Activated B cell treated with CpG ODN at 0.5 μM for 24 hours (primary cell): ENCODE measurements at regions of chr1 and their contacts with region 1.

Region 1: GRCh38 chr1:145978854-145979759 is 14.6 kb downstream of the POLR3GL start:
- DNase-seq: peak; percentile 55
- ATAC-seq: peak; percentile 81
- H3K4me3 Mint-ChIP-seq: no peak overlapping the region
- H3K27ac Mint-ChIP-seq: no peak overlapping the region
- H3K4me1 Mint-ChIP-seq: no peaks in the 10 kb centered on the region
- H3K27me3 Mint-ChIP-seq: no peaks in the 10 kb centered on the region
- CTCF ChIP-seq: no peak

Region 2: GRCh38 chr1:145845514-145846161 is 133.5 kb before region 1 on chr1 and contains the start of gene NUDT17:
- CTCF ChIA-PET with region 1: interaction called, 18 read pairs
- POLR2A ChIA-PET with region 1: interaction called, 8 read pairs
- intact Hi-C with region 1: no loop called
- DNase-seq: peak; percentile 71
- ATAC-seq: peak; percentile 69
- H3K4me3 Mint-ChIP-seq: no peak within 1 kb of the TSS
- H3K27ac Mint-ChIP-seq: no peak within 1 kb of the TSS
- H3K4me1 Mint-ChIP-seq: peaks cover 8% of the 10 kb centered on the region
- H3K27me3 Mint-ChIP-seq: no peaks in the 10 kb centered on the region
- CTCF ChIP-seq: peak; percentile 64
- total RNA-seq, gene NUDT17: 2.9 and 5.4 TPM in 2 replicates

Region 3: GRCh38 chr1:145927063-145927886 is 51.8 kb before region 1 on chr1 and contains the start of gene RBM8A:
- CTCF ChIA-PET with region 1: interaction called, 6 read pairs
- POLR2A ChIA-PET with region 1: interaction called, 27 read pairs
- intact Hi-C with region 1: loop called (anchors 1 kb)
- DNase-seq: peak; percentile 77
- ATAC-seq: peak; percentile 97
- H3K4me3 Mint-ChIP-seq: no peak within 1 kb of the TSS
- H3K27ac Mint-ChIP-seq: peak within 1 kb of the TSS; percentile 74
- H3K4me1 Mint-ChIP-seq: peaks cover 15% of the 10 kb centered on the region
- H3K27me3 Mint-ChIP-seq: no peaks in the 10 kb centered on the region
- CTCF ChIP-seq: no peak
- total RNA-seq, gene RBM8A: 178 and 201 TPM in 2 replicates

Region 4: DNA sequence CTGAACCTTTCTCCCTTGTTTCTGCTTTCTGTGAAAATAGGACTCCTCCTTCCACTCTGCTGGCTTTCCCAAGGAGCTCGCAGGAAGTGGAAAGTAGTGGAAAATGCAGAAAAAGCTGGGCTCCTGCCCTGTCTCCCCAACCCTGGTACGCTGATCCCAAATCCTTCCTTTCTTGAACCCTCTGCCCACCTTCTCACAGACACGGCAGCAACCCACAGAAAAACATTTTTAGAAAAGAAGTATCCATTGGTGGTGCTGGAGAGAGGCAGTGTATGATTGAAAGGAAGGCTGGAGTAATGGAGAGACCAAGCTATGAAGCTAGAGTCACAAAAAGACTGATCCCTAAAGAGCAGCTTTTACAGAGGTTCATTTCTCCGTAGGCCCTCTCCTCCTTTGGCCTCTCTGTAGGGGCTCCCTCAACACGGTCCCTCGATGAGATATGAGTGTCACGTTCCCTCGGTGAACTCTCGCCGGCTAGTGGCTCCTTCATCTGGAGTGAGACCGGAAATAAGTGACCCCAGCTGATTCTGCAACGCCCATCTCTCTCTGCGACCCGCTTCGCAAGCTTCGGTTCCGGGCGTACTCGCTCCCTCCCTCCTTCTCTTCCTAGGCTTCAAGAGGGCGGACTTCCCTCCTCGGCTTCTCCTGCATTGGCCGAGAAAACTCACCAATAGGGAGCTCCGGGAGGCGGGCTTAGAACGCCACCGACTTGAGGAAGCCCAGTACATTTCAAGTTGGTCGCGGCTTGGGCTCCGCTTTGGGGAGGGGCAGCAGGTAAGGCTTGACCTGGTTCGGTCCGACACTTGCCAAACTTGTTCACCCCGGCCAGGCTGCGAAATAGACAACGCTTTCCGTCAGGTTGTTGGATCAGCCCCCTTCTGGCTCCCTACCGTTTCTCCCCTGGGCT is 14.9 kb before region 1 on chr1 and contains the starts of genes ANKRD34A and POLR3GL:
- CTCF ChIA-PET with region 1: interaction called, 26 read pairs
- POLR2A ChIA-PET with region 1: interaction called, 68 read pairs
- intact Hi-C with region 1: loop called (anchors 2 kb)
- DNase-seq: peak; percentile 78
- ATAC-seq: peak; percentile 88
- H3K4me3 Mint-ChIP-seq: peak within 1 kb of the TSS; percentile 97
- H3K27ac Mint-ChIP-seq: peak within 1 kb of the TSS; percentile 96
- H3K4me1 Mint-ChIP-seq: peaks cover 52% of the 10 kb centered on the region
- H3K27me3 Mint-ChIP-seq: no peaks in the 10 kb centered on the region
- CTCF ChIP-seq: no peak
- total RNA-seq, gene ANKRD34A: 1.4 and 2.4 TPM in 2 replicates
- total RNA-seq, gene POLR3GL: 22.7 and 23.7 TPM in 2 replicates

Region 5: GRCh38 chr1:145996433-145997015 is 17.4 kb after region 1 on chr1 and contains the start of gene TXNIP:
- CTCF ChIA-PET with region 1: interaction called, 247 read pairs
- POLR2A ChIA-PET with region 1: interaction called, 579 read pairs
- intact Hi-C with region 1: loop called (anchors 1 kb)
- DNase-seq: peak; percentile 82
- ATAC-seq: peak; percentile 85
- H3K4me3 Mint-ChIP-seq: peak within 1 kb of the TSS; percentile 88
- H3K27ac Mint-ChIP-seq: peak within 1 kb of the TSS; percentile 97
- H3K4me1 Mint-ChIP-seq: peaks cover 74% of the 10 kb centered on the region
- H3K27me3 Mint-ChIP-seq: no peaks in the 10 kb centered on the region
- CTCF ChIP-seq: no peak
- total RNA-seq, gene TXNIP: 300 and 306 TPM in 2 replicates

Region 6: GRCh38 chr1:146007506-146008133 is 28.5 kb after region 1 on chr1:
- CTCF ChIA-PET with region 1: interaction called, 247 read pairs
- POLR2A ChIA-PET with region 1: interaction called, 136 read pairs
- intact Hi-C with region 1: loop called (anchors 1 kb)
- DNase-seq: no peak
- ATAC-seq: no peak
- H3K4me3 Mint-ChIP-seq: no peak overlapping the region
- H3K27ac Mint-ChIP-seq: peak overlapping the region; percentile 96
- H3K4me1 Mint-ChIP-seq: peaks cover 26% of the 10 kb centered on the region
- H3K27me3 Mint-ChIP-seq: no peaks in the 10 kb centered on the region
- CTCF ChIP-seq: no peak

Region 7: GRCh38 chr1:146036965-146037646 is 58.0 kb after region 1 on chr1:
- CTCF ChIA-PET with region 1: interaction called, 8 read pairs
- POLR2A ChIA-PET with region 1: interaction called, 56 read pairs
- intact Hi-C with region 1: loop called (anchors 1 kb)
- DNase-seq: peak; percentile 61
- ATAC-seq: peak; percentile 56
- H3K4me3 Mint-ChIP-seq: peak overlapping the region; percentile 99
- H3K27ac Mint-ChIP-seq: peak overlapping the region; percentile 98
- H3K4me1 Mint-ChIP-seq: peaks cover 43% of the 10 kb centered on the region
- H3K27me3 Mint-ChIP-seq: peaks cover 2% of the 10 kb centered on the region
- CTCF ChIP-seq: no peak